ENCODE measurements at regions of chr20 and their contacts with region 1.

Region 1: DNA sequence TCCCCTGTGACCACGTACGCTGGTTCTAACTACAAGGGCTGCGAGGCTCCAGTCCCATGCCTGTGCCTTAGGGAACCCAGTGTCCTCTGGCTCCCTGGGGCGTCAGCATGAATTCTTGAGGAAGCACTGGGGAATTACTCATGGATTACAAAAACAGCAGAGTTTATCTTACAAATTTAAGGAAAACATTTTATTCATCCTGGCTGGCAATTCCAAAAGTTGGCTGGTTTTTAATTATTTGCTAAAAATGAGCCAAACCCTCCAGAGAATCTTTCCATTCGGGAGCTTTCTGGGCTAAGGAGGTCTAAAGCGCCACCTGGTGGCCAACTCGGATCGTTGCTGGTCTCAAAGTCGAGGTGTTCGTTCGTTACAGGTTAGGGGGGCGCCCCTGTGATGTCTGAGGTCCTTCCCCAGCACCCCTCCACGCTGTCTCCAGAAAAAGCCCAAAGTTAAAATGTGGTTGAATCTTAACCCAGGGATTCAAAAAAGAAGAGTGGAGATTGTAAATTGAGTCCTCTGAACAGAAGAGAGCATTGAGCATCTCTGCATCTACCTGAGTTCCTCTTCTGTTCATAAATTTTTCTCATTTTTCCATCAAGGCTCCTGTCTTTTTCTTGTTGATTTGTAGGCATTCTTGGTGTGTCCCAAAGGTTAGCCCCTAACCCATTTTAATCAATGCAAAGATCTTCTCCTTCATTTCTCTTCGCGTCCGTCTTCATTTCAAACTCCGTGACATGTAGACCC is 99.4 kb downstream of the BFSP1 start:
- DNase-seq: no peak
- H3K4me3 ChIP-seq: no peak overlapping the region
- H3K27ac ChIP-seq: no peak overlapping the region
- H3K4me1 ChIP-seq: no peaks in the 10 kb centered on the region
- H3K27me3 ChIP-seq: peaks cover 0 to 41% (median 6%) of the 10 kb centered on the region in 7 donors
- CTCF ChIP-seq: peak in 9 of 11 experiments; percentile 53 to 85 (median 79)
- POLR2A ChIP-seq: no peak

Region 2: GRCh38 chr20:16801919-16802911 is 629.6 kb before region 1 on chr20:
- intact Hi-C with region 1: loop called (anchors 2 kb)
- DNase-seq: no peak
- H3K4me3 ChIP-seq: no peak overlapping the region
- H3K27ac ChIP-seq: no peak overlapping the region
- H3K4me1 ChIP-seq: peaks cover 0 to 5% (median 0%) of the 10 kb centered on the region in 6 donors
- H3K27me3 ChIP-seq: peaks cover 0 to 88% (median 16%) of the 10 kb centered on the region in 7 donors
- CTCF ChIP-seq: peak in 10 of 11 experiments; percentile 27 to 80 (median 64)
- POLR2A ChIP-seq: no peak